ENCODE measurements at regions of chr19 and their contacts with region 1.

Region 1: GRCh38 chr19:18058208-18059030 is 28.3 kb downstream of the IL12RB1 start:
- DNase-seq: peak; percentile 81 to 93 (median 93)
- ATAC-seq: peak; percentile 87 to 89
- H3K4me3 ChIP-seq: no peak overlapping the region
- H3K27ac ChIP-seq: peak overlapping the region; percentile 59
- H3K4me1 ChIP-seq: peaks cover 3% of the 10 kb centered on the region
- H3K27me3 ChIP-seq: no peaks in the 10 kb centered on the region

Region 2: GRCh38 chr19:18007044-18007916 is 51.1 kb before region 1 on chr19:
- intact Hi-C with region 1: loop called (anchors 1 to 2 kb)
- DNase-seq: peak; percentile 82 to 94 (median 92)
- ATAC-seq: peak; percentile 87 to 88
- H3K4me3 ChIP-seq: peak overlapping the region; percentile 58
- H3K27ac ChIP-seq: peak overlapping the region; percentile 49
- H3K4me1 ChIP-seq: no peaks in the 10 kb centered on the region
- H3K27me3 ChIP-seq: no peaks in the 10 kb centered on the region

Region 3: GRCh38 chr19:18281082-18282020 is 222.9 kb after region 1 on chr19 and contains the start of gene JUND:
- intact Hi-C with region 1: no loop called
- DNase-seq: peak; percentile 99 to 100 (median 99)
- ATAC-seq: peak; percentile 82 to 87
- H3K4me3 ChIP-seq: peak within 1 kb of the TSS; percentile 84
- H3K27ac ChIP-seq: peak within 1 kb of the TSS; percentile 99
- H3K4me1 ChIP-seq: peaks cover 13% of the 10 kb centered on the region
- H3K27me3 ChIP-seq: no peaks in the 10 kb centered on the region
- total RNA-seq, gene JUND: 117 to 229 (median 122) TPM

Measured in right cardiac atrium (tissue), 5 donors.